Heart right ventricle (tissue), 16 donors: ENCODE measurements at regions of chr10 and their contacts with region 1.

Region 1: DNA sequence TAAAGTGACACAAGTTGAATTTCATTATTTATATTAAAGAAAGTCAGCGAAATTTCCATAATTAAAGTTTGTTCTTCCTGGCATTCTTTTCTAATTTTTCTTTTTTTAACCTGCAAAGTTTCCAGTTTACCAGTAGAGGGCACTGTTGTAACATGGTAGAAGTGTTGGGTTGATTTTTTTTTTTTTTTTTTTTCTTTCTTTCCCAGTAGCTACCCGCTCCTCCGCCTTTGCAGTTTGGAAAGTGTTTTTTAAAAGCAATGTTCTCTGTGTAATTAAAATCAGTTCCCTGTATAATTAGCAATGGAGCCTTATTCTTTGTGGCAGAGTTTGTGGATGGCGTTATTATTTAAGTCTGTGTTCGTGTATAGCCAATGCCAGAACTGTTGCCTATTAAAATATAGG is 53.7 kb downstream of the TAF3 start:
- DNase-seq: no peak
- ATAC-seq: no peak
- H3K4me3 ChIP-seq: peak overlapping the region in 8 of 10 donors; percentile 7 to 45 (median 36)
- H3K27ac ChIP-seq: no peak overlapping the region
- H3K4me1 ChIP-seq: peaks cover 0 to 5% (median 0%) of the 10 kb centered on the region in 9 donors
- H3K27me3 ChIP-seq: no peaks in the 10 kb centered on the region
- CTCF ChIP-seq: peak; percentile 72 to 89 (median 79)

Region 2: DNA sequence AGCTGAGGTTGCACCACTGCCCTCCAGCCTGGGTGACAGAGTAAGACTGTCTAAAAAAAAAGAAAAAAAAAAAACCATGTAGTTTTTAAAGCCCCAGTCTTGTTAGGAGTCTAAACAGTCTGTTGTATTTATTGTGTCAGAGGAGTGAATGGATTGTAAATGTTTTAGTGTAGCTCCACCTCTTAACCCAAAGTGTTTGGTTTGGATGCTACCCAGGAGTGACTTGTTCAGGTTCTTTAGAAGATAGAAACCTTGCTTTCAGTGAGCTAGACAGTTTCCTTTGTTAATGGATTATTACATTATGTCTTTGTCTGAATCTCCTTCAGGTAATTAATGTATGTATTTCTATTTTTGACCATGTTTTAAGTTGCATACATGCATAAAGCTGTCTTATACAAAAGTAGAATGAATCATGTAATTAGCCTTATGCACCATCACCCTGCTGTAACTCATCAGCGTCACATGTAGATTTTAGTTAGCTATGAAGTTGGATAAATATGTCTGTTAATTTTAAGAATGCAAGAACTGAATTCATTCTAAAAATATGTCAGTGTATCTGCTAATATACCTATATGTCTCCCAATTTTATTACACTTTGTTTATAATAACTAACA is 44.0 kb after region 1 on chr10:
- intact Hi-C with region 1: no loop called
- DNase-seq: no peak
- ATAC-seq: no peak
- H3K4me3 ChIP-seq: no peak overlapping the region
- H3K27ac ChIP-seq: no peak overlapping the region
- H3K4me1 ChIP-seq: peaks cover 0 to 14% (median 5%) of the 10 kb centered on the region in 9 donors
- H3K27me3 ChIP-seq: no peaks in the 10 kb centered on the region
- CTCF ChIP-seq: no peak

Region 3: DNA sequence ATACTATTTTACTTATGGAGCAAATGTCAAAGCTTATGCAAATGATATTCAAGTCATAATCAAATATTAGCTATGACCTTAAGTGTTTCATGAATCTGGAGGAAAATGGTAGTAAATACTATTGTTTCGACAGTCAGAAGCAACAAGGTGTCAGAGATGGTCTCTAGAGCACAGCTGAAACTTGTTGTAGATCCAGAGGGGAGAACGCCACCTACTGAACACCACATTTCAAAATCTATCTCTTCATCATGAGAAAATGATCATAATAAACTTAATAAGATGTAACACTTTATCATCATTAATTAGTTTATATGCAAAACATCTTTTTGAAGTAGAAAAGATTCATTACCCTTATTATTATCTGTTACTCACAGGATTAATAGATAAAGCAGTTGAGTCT is 601.2 kb after region 1 on chr10:
- intact Hi-C with region 1: loop called in 1 of 10 experiments (anchors 10 kb)
- DNase-seq: no peak
- ATAC-seq: no peak
- H3K4me3 ChIP-seq: no peak overlapping the region
- H3K27ac ChIP-seq: no peak overlapping the region
- H3K4me1 ChIP-seq: no peaks in the 10 kb centered on the region
- H3K27me3 ChIP-seq: peaks cover 0 to 7% (median 0%) of the 10 kb centered on the region in 7 donors
- CTCF ChIP-seq: peak in 6 of 9 donors; percentile 27 to 48 (median 30)

Region 4: GRCh38 chr10:9209105-9209798 is 1337.2 kb after region 1 on chr10:
- intact Hi-C with region 1: loop called (anchors 2 to 5 kb)
- DNase-seq: peak; percentile 39 to 44
- ATAC-seq: no peak
- H3K4me3 ChIP-seq: no peak overlapping the region
- H3K27ac ChIP-seq: no peak overlapping the region
- H3K4me1 ChIP-seq: no peaks in the 10 kb centered on the region
- H3K27me3 ChIP-seq: peaks cover 0 to 24% (median 4%) of the 10 kb centered on the region in 7 donors
- CTCF ChIP-seq: peak; percentile 72 to 94 (median 88)

Region 5: DNA sequence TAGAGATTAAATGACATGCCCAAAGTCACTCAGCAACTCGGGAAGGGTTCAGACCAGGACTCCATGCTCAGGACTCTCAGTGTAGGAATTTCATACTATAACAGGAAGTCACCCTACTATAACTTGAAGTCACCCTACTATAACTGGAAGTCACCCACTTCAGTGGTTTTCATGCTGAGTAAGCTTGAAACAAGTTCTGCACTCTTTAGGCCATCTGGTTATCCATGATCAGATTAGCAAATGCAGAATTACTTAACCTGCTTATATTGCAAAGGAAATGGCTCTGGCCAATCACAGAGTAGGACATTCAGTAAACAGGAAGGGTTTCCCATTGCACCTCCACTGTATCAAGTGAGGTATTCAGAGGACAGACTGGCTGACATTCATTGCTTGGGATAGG is 1422.8 kb after region 1 on chr10:
- intact Hi-C with region 1: loop called in 8 of 10 experiments (anchors 5 to 10 kb)
- DNase-seq: no peak
- ATAC-seq: no peak
- H3K4me3 ChIP-seq: no peak overlapping the region
- H3K27ac ChIP-seq: no peak overlapping the region
- H3K4me1 ChIP-seq: no peaks in the 10 kb centered on the region
- H3K27me3 ChIP-seq: peaks cover 0 to 8% (median 0%) of the 10 kb centered on the region in 7 donors
- CTCF ChIP-seq: no peak

Region 6: GRCh38 chr10:9302120-9302746 is 1430.2 kb after region 1 on chr10:
- intact Hi-C with region 1: loop called in 7 of 10 experiments (anchors 5 to 10 kb)
- DNase-seq: peak in 1 of 2 donors; percentile 7
- ATAC-seq: no peak
- H3K4me3 ChIP-seq: no peak overlapping the region
- H3K27ac ChIP-seq: no peak overlapping the region
- H3K4me1 ChIP-seq: no peaks in the 10 kb centered on the region
- H3K27me3 ChIP-seq: peaks cover 0 to 22% (median 3%) of the 10 kb centered on the region in 7 donors
- CTCF ChIP-seq: peak in 8 of 9 donors; percentile 21 to 64 (median 46)